Breast epithelium (tissue), 4 donors: ENCODE measurements at regions of chr5 and their contacts with region 1.

Region 1: DNA sequence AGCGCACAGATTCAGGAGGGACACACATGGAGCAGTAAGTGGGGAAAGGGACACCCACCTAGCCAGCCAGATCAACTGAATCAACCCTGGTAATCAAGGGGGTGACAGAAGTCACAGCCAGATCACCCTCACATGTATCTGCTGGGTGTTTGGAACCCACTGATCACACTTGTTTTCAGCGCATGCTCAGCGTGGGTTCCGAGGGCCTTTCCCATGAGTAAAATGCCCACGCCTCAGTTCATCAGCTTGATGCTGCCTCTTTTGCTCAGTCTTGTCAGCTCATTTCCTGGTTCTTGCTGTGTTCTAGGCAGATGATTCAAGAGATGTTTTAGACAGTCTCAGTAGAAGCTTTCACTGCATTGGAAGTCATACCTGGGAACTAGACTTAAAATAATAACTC is 123.2 kb upstream of the SLC30A5 start:
- DNase-seq: no peak
- H3K4me3 ChIP-seq: no peak overlapping the region
- H3K27ac ChIP-seq: no peak overlapping the region
- H3K4me1 ChIP-seq: no peaks in the 10 kb centered on the region
- H3K27me3 ChIP-seq: no peaks in the 10 kb centered on the region
- CTCF ChIP-seq: no peak
- POLR2A ChIP-seq: no peak

Region 2: DNA sequence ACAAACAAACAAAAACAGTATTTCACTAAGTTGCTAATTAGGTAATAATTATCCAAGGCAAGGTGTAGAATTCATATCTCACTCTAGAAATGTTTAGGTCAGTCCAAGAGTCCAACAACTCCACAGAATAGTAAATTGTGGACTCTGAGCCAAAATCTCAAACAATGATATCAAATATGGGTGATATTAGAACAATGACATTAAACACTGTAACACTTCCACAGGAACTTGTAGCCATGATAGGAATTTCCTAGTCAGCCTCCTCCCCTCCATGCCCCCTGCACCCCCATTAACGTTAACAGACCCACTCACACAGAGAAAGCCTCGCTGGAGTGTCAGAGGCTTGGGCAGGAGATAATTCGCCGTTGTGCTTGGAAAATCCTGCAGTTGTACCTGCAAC is 1060.1 kb before region 1 on chr5:
- intact Hi-C with region 1: loop called (anchors 10 kb)
- DNase-seq: no peak
- H3K4me3 ChIP-seq: no peak overlapping the region
- H3K27ac ChIP-seq: no peak overlapping the region
- H3K4me1 ChIP-seq: no peaks in the 10 kb centered on the region
- H3K27me3 ChIP-seq: no peaks in the 10 kb centered on the region
- CTCF ChIP-seq: no peak
- POLR2A ChIP-seq: no peak